Activated naive CD8-positive, alpha-beta T cell treated with anti-CD3 and anti-CD28 coated beads, Interleukin-2, amount 10 ng/mL, durations not matched to agents 7 days and 5 days (primary cell): ENCODE measurements at regions of chr20 and their contacts with region 1.

Region 1: DNA sequence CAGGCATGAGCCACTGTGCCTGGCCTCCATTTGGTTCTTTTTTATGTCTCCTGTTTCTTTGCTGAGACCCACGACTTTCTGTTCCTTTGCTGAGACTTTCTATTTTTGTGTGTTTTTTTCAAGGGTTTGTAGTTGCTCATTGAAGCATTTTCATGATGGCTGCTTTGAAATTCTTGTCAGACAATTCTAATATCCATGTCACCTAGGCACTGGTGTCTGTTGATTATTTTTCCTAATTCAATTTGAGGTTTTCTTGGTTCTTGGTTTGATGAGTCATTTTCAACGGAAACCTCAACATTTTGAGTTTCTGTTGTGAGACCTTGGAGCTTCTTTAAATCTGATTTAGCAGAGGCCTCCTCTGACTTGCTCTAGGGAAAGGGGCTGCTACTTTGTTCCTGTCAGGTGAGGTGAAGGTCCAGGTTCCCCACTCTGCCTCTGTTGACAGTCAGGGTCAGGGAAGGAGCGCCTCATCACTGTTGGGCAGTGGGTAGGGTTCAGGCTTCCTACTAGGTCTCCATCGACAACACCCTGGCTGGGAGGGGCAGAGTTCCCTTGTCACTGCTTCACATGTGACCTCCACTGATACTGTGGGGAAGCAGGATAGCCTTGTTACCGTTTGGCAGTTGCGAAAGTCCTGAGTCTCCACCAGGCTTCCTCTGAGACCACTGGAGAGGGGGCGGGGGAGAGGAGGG is 67.2 kb upstream of the RNF24 start:
- DNase-seq: peak; percentile 71
- ATAC-seq: peak; percentile 76
- H3K4me3 Mint-ChIP-seq: peak overlapping the region; percentile 60
- H3K27ac Mint-ChIP-seq: peak overlapping the region; percentile 92
- H3K4me1 Mint-ChIP-seq: peaks cover 43% of the 10 kb centered on the region
- H3K27me3 Mint-ChIP-seq: no peaks in the 10 kb centered on the region

Region 2: DNA sequence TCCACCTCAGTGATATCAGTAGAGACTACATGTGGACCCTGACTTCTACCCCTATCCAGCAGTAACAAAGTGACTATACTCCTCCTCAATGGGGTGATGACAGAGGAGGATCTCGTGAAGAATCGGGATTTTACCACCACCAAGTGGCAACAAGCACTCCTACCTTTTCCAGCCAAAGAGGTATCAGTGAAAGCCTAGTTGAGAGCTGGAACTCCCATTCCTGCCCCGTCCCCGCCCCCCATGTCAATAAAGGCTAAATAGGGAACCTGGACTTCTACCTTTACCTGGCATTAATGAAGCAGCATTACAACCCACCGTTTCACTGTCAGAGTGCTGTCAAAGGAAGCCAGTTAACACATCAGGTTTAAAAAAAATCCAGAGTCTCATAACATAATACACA is 112.5 kb before region 1 on chr20:
- POLR2A ChIA-PET with region 1: no interaction called
- DNase-seq: no peak
- ATAC-seq: no peak
- H3K4me3 Mint-ChIP-seq: no peak overlapping the region
- H3K27ac Mint-ChIP-seq: no peak overlapping the region
- H3K4me1 Mint-ChIP-seq: peaks cover 3% of the 10 kb centered on the region
- H3K27me3 Mint-ChIP-seq: no peaks in the 10 kb centered on the region

Region 3: DNA sequence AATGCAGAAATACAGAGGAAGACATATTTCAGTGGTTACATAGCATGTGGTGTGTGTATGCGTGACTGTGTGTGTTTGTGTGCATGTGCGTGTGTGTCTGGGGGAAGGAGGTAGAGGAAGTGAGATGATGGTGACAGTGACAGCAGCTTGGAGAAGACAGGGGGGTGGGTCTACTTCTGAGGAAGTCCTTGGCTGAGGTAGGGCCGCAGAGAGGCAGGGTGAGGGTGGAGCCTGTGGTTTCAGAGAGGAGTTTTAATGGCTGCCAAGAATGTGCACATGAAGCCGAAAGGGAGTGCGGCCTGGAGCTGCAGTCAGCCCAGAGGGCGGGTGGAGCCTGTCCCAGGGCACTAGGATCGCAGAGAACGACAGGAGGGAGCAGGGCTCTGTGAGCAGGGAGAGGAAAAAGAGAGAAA is 44.5 kb before region 1 on chr20:
- POLR2A ChIA-PET with region 1: interaction called, 17 read pairs
- DNase-seq: peak; percentile 80
- ATAC-seq: peak; percentile 100
- H3K4me3 Mint-ChIP-seq: peak overlapping the region; percentile 89
- H3K27ac Mint-ChIP-seq: peak overlapping the region; percentile 99
- H3K4me1 Mint-ChIP-seq: peaks cover 20% of the 10 kb centered on the region
- H3K27me3 Mint-ChIP-seq: peaks cover 2% of the 10 kb centered on the region